A549 (cell line): ENCODE measurements at regions of chr20 and their contacts with region 1.

Region 1: DNA sequence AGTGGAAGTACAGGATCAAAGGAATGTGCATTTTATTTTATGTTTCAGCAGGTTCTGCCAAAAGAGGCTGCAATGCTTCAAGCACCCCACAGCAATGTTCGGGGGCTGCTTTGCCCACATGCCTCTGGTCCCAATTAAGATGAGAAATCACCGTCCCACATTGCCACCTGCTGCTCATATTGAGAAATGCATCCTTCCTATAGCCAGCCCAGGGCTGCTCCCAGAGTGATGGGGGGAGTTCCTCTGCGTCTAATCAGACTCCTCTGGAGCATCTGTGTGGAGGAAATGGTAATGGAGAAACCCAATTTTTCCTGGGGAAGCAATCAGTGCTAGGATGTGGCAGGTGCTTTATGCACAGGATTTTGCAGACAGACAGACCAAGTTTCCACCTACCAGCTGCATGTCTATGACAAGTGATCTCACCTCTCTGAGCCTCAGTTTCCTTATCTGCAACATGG is 33.7 kb downstream of the PTGIS start:
- DNase-seq: peak; percentile 57 to 80
- ATAC-seq: peak; percentile 91
- H3K4me3 ChIP-seq: no peak overlapping the region
- H3K27ac ChIP-seq: no peak overlapping the region
- H3K4me1 ChIP-seq: no peaks in the 10 kb centered on the region
- CTCF ChIP-seq: peak; percentile 85
- EP300 ChIP-seq: no peak
- POLR2A ChIP-seq: no peak
- RAD21 ChIP-seq: peak; percentile 81 to 82

Region 2: DNA sequence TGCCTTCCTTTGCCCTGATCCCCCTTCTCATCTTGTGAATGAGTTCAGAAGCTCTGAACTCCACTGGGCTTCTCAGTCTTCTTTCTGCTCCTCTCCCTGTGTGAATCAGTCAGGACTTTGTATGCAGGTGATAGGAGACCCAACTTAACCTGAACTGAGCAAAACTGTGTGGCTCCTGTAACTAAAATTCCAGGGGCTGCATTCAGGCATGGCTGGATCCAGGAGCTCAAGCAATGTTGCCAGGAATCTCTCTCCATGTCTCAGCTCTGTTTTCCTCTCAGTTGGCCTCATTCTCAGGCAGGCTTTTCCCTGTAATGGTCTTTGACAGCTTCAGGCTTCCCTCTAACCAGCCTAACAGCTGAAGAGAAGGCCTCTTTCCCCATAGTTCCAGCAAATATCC is 205.5 kb before region 1 on chr20:
- CTCF ChIA-PET with region 1: interaction called, 86 read pairs
- POLR2A ChIA-PET with region 1: no interaction called
- DNase-seq: no peak
- ATAC-seq: no peak
- H3K4me3 ChIP-seq: no peak overlapping the region
- H3K27ac ChIP-seq: no peak overlapping the region
- H3K4me1 ChIP-seq: no peaks in the 10 kb centered on the region
- CTCF ChIP-seq: no peak
- EP300 ChIP-seq: no peak
- POLR2A ChIP-seq: no peak
- RAD21 ChIP-seq: no peak

Region 3: DNA sequence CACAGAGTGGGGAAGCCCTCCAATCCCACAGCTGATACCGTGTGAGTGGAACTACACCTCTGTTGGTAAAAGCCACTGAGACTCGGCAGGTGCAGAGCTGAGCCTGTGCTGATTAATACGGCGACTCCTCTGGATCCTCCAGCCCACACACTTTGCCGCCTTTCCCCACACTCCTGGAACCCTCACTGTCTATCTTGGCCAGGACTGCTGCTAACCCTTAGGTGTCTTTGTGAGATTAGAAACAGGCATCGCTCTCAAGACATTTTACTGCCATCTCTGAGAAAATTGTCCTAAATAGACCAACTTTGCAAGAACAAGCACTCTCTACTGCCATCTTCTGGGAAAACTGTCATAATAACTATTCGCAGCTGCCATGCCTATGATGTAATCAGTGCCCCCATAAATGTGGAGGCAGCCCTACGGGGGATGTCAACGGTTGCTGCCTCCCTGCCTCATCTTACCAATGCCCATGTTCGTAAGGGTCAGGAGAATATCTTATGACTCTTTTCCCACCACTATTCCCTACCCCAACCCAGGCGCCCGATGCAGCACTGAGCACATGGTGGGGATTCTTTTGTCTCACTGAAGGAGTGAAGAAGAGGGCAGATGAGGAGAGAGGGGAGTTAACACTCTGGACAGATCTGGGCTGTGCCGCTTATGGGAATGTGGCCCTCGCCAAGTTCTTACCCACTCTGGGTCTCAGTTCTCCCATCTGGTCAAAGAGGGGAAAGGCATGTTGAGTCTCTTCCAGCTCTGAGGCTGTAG is 25.7 kb before region 1 on chr20:
- CTCF ChIA-PET with region 1: interaction called, 30 read pairs
- POLR2A ChIA-PET with region 1: no interaction called
- DNase-seq: peak; percentile 52 to 61
- ATAC-seq: peak; percentile 66 to 80
- H3K4me3 ChIP-seq: no peak overlapping the region
- H3K27ac ChIP-seq: peak overlapping the region; percentile 21 to 50; a peak in 2 of 6 replicates
- H3K4me1 ChIP-seq: peaks cover 12% of the 10 kb centered on the region; the same call in 1 of the 3 replicates
- CTCF ChIP-seq: peak; percentile 81
- EP300 ChIP-seq: no peak
- POLR2A ChIP-seq: no peak
- RAD21 ChIP-seq: peak; percentile 67 to 72

Region 4: GRCh38 chr20:49516916-49517789 is 17.1 kb before region 1 on chr20:
- CTCF ChIA-PET with region 1: interaction called, 14 read pairs
- POLR2A ChIA-PET with region 1: no interaction called
- DNase-seq: no peak
- ATAC-seq: peak in 1 of 2 experiments; percentile 48; a peak in 3 of 6 replicates
- H3K4me3 ChIP-seq: no peak overlapping the region
- H3K27ac ChIP-seq: no peak overlapping the region
- H3K4me1 ChIP-seq: peaks cover 7% of the 10 kb centered on the region; the same call in 1 of the 3 replicates
- CTCF ChIP-seq: no peak
- EP300 ChIP-seq: no peak
- POLR2A ChIP-seq: no peak
- RAD21 ChIP-seq: no peak